ENCODE measurements at regions of chr17 and their contacts with region 1.

Region 1: GRCh38 chr17:28726226-28727130 is at the start of gene TLCD1:
- DNase-seq: peak; percentile 90 to 92
- ATAC-seq: peak; percentile 71 to 88 (median 82)
- H3K4me3 ChIP-seq: peak within 1 kb of the TSS; percentile 50 to 89 (median 78)
- H3K27ac ChIP-seq: peak within 1 kb of the TSS in 9 of 10 donors; percentile 5 to 98 (median 90)
- H3K4me1 ChIP-seq: peaks cover 19 to 65% (median 39%) of the 10 kb centered on the region in 9 donors
- H3K27me3 ChIP-seq: no peaks in the 10 kb centered on the region
- CTCF ChIP-seq: peak; percentile 98 to 100 (median 99)
- total RNA-seq, gene TLCD1: 0.36 to 1.8 (median 0.89) TPM

Region 2: GRCh38 chr17:28750178-28751047 is 23.9 kb after region 1 on chr17:
- intact Hi-C with region 1: loop called in 7 of 10 experiments (anchors 1 kb)
- DNase-seq: peak; percentile 91 to 93
- ATAC-seq: peak; percentile 69 to 87 (median 80)
- H3K4me3 ChIP-seq: no peak overlapping the region
- H3K27ac ChIP-seq: peak overlapping the region in 1 of 10 donors; percentile 28
- H3K4me1 ChIP-seq: peaks cover 0 to 35% (median 28%) of the 10 kb centered on the region in 9 donors
- H3K27me3 ChIP-seq: peaks cover 0 to under 1% (median 0%) of the 10 kb centered on the region in 7 donors
- CTCF ChIP-seq: peak; percentile 98 to 100 (median 100)

Region 3: DNA sequence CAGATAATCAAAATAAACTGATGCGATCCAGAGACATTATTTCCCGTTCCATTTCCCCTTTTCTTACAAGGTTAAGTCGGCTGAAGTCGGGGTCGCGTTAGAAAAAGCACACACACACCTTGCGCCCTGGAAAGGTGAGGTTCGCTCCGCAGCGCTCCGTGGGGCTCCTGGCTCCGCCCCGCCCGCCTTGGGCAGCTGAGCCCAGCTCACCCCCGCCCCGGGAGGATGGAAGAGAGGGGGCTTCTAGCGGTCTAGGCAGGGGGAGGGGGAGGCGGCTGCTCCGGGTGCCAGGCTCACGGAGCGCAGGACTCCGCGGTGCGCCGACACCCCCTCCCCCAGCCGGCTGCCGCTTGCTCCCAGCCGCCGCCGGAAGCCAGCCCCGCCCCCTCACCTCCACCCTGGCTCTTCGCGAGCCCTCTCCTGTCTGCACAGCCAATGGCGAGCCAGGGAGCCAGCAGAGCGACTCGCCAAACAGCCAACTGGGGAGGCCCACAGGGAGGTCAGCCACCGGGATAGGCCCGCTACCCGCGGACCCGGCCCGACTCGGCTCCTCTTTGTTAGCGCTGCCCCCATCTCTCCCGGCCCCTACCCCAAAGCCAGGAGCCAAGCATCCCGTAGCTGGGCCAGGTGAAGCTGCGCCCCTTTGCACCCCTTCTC is 85.7 kb after region 1 on chr17:
- intact Hi-C with region 1: loop called in 1 of 10 experiments (anchors 2 kb)
- DNase-seq: peak; percentile 98
- ATAC-seq: peak; percentile 100
- H3K4me3 ChIP-seq: peak overlapping the region; percentile 71 to 98 (median 93)
- H3K27ac ChIP-seq: peak overlapping the region; percentile 23 to 92 (median 87)
- H3K4me1 ChIP-seq: peaks cover 0 to 50% (median 36%) of the 10 kb centered on the region in 9 donors
- H3K27me3 ChIP-seq: no peaks in the 10 kb centered on the region
- CTCF ChIP-seq: no peak

Region 4: GRCh38 chr17:28916302-28916934 is 189.9 kb after region 1 on chr17:
- intact Hi-C with region 1: loop called in 4 of 10 experiments (anchors 10 kb)
- DNase-seq: no peak
- ATAC-seq: peak in 6 of 8 donors; percentile 61 to 80 (median 70)
- H3K4me3 ChIP-seq: no peak overlapping the region
- H3K27ac ChIP-seq: peak overlapping the region in 2 of 10 donors; percentile 5 to 34
- H3K4me1 ChIP-seq: peaks cover 0 to 16% (median 0%) of the 10 kb centered on the region in 9 donors
- H3K27me3 ChIP-seq: no peaks in the 10 kb centered on the region
- CTCF ChIP-seq: peak in 8 of 9 donors; percentile 50 to 78 (median 72)

Region 5: GRCh38 chr17:29111816-29112499 is 385.5 kb after region 1 on chr17:
- intact Hi-C with region 1: loop called in 3 of 10 experiments (anchors 10 kb)
- DNase-seq: peak; percentile 65 to 81
- ATAC-seq: peak; percentile 50 to 73 (median 62)
- H3K4me3 ChIP-seq: no peak overlapping the region
- H3K27ac ChIP-seq: peak overlapping the region in 9 of 10 donors; percentile 4 to 78 (median 49)
- H3K4me1 ChIP-seq: peaks cover 26 to 59% (median 34%) of the 10 kb centered on the region in 9 donors
- H3K27me3 ChIP-seq: no peaks in the 10 kb centered on the region
- CTCF ChIP-seq: peak; percentile 76 to 95 (median 92)